CD8-positive, alpha-beta memory T cell (primary cell): ENCODE measurements at regions of chr12 and their contacts with region 1.

Region 1: DNA sequence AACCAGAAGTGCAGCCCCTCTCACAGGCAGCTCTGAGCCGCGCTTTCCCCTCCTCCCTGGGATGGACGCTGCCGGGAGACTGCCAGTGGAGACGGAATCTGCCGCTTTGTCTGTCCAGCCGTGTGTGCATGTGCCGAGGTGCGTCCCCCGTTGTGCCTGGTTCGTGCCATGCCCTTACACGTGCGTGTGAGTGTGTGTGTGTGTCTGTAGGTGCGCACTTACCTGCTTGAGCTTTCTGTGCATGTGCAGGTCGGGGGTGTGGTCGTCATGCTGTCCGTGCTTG is 12.3 kb upstream of the TAMALIN start:
- DNase-seq: no peak
- H3K4me3 ChIP-seq: no peak overlapping the region
- H3K4me3 Mint-ChIP-seq: no peak overlapping the region
- H3K27ac ChIP-seq: no peak overlapping the region
- H3K27ac Mint-ChIP-seq: no peak overlapping the region
- H3K4me1 ChIP-seq: no peaks in the 10 kb centered on the region
- H3K4me1 Mint-ChIP-seq: peaks cover 2 to 4% (median 3%) of the 10 kb centered on the region in 3 donors
- H3K27me3 ChIP-seq: no peaks in the 10 kb centered on the region
- H3K27me3 Mint-ChIP-seq: peaks cover 0 to 1% of the 10 kb centered on the region in 2 donors

Region 2: DNA sequence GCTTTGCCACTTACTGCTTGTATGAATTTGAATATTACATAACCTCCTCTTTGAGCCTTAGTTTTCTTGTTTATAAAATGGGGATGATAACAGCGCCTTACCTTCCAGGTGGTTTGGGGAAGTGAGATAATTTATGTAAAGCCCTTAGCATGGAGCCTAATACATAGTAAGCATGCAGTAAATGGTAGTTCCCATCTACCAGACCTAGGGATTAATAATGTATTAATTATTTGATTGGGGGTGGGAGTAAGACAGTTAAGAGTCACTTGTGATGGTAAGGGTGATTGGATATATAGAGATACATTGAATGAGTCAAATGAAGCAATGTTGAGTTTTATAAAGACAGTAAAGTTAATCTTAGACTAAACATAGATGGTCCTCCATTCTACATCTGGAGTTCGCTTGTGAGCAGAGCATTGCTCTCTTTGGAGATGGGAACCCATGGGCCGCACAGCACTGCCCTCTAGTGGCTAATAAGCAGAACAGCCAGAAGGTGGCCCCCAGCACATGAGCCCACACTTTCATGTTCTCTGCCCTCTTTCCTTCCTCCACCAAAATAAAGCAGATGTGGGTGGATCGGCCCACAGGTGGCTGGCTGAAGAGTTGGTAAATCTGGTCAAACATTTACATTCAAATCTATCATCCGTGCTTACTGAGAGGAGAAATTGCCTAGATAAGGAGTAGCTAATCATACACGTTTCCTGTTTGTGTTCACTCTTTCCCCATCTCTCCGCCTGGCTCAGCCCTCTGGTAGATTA is 14.2 kb before region 1 on chr12:
- CTCF ChIA-PET with region 1: interaction called, 16 read pairs
- POLR2A ChIA-PET with region 1: no interaction called
- DNase-seq: peak; percentile 44 to 76 (median 58)
- H3K4me3 ChIP-seq: no peak overlapping the region
- H3K4me3 Mint-ChIP-seq: no peak overlapping the region
- H3K27ac ChIP-seq: no peak overlapping the region
- H3K27ac Mint-ChIP-seq: peak overlapping the region in 2 of 8 donors; percentile 44 to 62
- H3K4me1 ChIP-seq: peaks cover 11% of the 10 kb centered on the region
- H3K4me1 Mint-ChIP-seq: peaks cover 24% of the 10 kb centered on the region in 3 donors
- H3K27me3 ChIP-seq: no peaks in the 10 kb centered on the region
- H3K27me3 Mint-ChIP-seq: peaks cover 0 to 6% of the 10 kb centered on the region in 2 donors

Region 3: GRCh38 chr12:52070185-52070925 is 75.9 kb after region 1 on chr12:
- CTCF ChIA-PET with region 1: no interaction called
- POLR2A ChIA-PET with region 1: no interaction called
- DNase-seq: no peak
- H3K4me3 ChIP-seq: peak overlapping the region; percentile 95
- H3K4me3 Mint-ChIP-seq: peak overlapping the region; percentile 94 to 99 (median 98)
- H3K27ac ChIP-seq: peak overlapping the region; percentile 90
- H3K27ac Mint-ChIP-seq: peak overlapping the region; percentile 96 to 100 (median 99)
- H3K4me1 ChIP-seq: peaks cover 36% of the 10 kb centered on the region
- H3K4me1 Mint-ChIP-seq: peaks cover 40 to 52% (median 51%) of the 10 kb centered on the region in 3 donors
- H3K27me3 ChIP-seq: no peaks in the 10 kb centered on the region
- H3K27me3 Mint-ChIP-seq: peaks cover 2 to 8% of the 10 kb centered on the region in 2 donors

Region 4: DNA sequence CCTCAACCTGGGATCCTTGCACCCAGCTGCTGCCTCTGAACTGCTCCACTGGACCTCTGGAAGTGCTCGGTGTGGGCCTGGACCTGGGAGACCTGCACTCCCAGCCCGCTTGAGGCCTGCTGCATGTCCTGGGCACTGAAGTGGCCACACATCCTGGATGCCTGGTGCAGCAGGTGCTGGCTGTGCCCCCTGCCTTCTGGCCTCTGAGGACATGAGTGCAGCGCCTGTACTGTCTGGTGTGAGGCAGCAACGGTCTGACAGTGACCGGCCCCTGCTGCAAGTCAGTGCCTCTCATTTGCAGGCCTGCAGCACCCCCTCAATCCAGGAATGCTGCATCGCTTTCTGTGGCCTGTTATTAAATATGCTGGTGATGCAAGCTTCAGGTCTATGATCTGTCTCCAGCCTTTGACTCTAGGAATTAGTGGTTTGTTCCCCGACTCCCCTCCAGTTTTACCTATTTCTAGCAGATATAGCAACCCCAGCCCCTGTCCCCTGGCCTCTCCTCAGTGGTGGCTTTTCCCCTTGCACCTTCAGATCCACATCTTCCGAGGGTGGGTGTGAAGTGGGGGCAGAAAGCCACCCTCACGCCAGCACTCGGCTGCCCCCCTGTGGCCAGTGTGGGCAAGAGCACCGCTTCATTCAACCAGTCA is 88.6 kb after region 1 on chr12:
- CTCF ChIA-PET with region 1: interaction called, 11 read pairs
- POLR2A ChIA-PET with region 1: no interaction called
- DNase-seq: peak; percentile 58 to 77 (median 60)
- H3K4me3 ChIP-seq: no peak overlapping the region
- H3K4me3 Mint-ChIP-seq: no peak overlapping the region
- H3K27ac ChIP-seq: no peak overlapping the region
- H3K27ac Mint-ChIP-seq: peak overlapping the region in 2 of 8 donors; percentile 68 to 77
- H3K4me1 ChIP-seq: peaks cover 4% of the 10 kb centered on the region
- H3K4me1 Mint-ChIP-seq: peaks cover 2 to 6% (median 6%) of the 10 kb centered on the region in 3 donors
- H3K27me3 ChIP-seq: no peaks in the 10 kb centered on the region
- H3K27me3 Mint-ChIP-seq: peaks cover 6 to 15% of the 10 kb centered on the region in 2 donors